Right ventricle myocardium inferior (tissue), 1 donor: ENCODE measurements at regions of chr2 and their contacts with region 1.

Region 1: DNA sequence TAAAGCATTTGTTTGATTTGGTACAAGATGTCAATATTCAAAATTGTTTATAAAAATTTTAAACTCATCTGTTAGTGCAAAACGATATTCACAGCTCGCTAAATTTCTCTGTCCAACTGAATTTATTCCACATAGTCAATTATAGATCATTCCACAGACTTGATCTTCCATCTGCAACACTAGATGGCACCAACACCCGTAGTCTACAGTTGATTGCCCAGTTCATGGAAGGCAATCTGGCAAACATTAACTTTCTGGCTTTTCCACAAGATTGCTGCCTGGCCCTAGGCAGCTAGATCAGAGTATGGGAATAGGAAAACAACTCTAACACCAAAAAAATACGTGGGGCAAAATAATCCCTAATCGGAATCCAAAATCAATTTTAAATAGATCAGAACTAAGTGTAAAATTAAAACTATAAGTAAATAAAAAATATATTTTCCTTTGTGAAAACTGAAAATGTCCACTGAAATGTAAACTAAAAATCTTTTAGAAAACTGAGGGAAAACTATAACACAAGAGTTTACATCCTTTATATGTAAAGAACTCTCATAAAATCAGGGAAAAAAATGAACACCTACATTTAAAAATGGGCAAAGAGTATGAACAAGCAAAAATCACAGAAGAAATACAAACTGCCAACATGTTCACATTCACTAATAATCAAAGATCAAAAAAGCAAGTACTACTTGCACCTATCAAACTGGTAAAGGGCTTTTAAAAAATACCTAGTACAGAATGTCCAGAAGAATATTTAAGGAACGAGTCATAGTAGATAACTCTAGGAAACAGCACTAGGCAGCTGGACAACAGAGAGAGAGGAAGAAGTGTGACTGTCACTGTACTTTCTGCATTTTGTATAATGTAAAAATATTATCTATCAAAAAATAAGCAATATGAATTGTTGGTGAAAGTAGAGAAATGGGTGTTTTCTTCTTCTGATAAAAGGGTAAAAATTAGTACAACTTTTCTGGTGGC is 35.0 kb downstream of the RTN4 start:
- DNase-seq: no peak
- ATAC-seq: peak; percentile 65

Region 2: GRCh38 chr2:55175254-55176025 is 160.2 kb after region 1 on chr2:
- intact Hi-C with region 1: loop called (anchors 1 kb)
- DNase-seq: no peak
- ATAC-seq: peak; percentile 76